ENCODE measurements at regions of chr7 and their contacts with region 1.

Region 1: GRCh38 chr7:116588641-116589594 is 64.1 kb downstream of the CAV1 start:
- DNase-seq: no peak
- H3K4me3 ChIP-seq: no peak overlapping the region
- H3K27ac ChIP-seq: peak overlapping the region in 3 of 4 donors; percentile 29 to 61 (median 56)
- H3K4me1 ChIP-seq: peaks cover 0 to 30% (median 19%) of the 10 kb centered on the region in 4 donors
- H3K27me3 ChIP-seq: no peaks in the 10 kb centered on the region
- CTCF ChIP-seq: peak; percentile 58 to 75 (median 71)
- EP300 ChIP-seq: no peak
- POLR2A ChIP-seq: no peak

Region 2: GRCh38 chr7:116173051-116174028 is 415.6 kb before region 1 on chr7:
- intact Hi-C with region 1: loop called (anchors 2 kb)
- DNase-seq: no peak
- H3K4me3 ChIP-seq: no peak overlapping the region
- H3K27ac ChIP-seq: peak overlapping the region in 1 of 4 donors; percentile 38
- H3K4me1 ChIP-seq: peaks cover 0 to 14% (median 4%) of the 10 kb centered on the region in 4 donors
- H3K27me3 ChIP-seq: no peaks in the 10 kb centered on the region
- CTCF ChIP-seq: peak; percentile 21 to 52 (median 46)
- EP300 ChIP-seq: no peak
- POLR2A ChIP-seq: no peak

Region 3: DNA sequence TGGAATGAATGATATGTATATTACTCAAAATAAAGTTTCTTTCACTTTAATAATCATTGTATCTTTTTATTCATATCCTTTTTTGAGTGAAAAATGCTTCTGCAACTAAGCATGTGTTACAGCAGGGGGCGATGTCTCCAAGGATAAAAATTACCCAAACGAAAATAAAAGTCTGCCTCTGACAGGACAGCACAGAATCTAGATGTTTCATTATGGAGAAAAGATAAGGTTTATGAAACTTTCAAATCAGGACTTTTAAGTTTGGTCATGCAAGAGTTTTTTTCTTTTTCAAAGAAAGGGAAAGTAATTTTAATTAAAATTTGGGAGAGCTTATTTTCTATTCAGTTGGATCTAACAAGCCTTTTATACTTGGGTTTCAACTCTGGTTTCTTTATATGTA is 330.2 kb before region 1 on chr7:
- intact Hi-C with region 1: loop called (anchors 2 kb)
- DNase-seq: no peak
- H3K4me3 ChIP-seq: no peak overlapping the region
- H3K27ac ChIP-seq: peak overlapping the region; percentile 52 to 70 (median 60)
- H3K4me1 ChIP-seq: peaks cover 0 to 45% (median 17%) of the 10 kb centered on the region in 4 donors
- H3K27me3 ChIP-seq: no peaks in the 10 kb centered on the region
- CTCF ChIP-seq: peak; percentile 69 to 88 (median 78)
- EP300 ChIP-seq: no peak
- POLR2A ChIP-seq: no peak

Region 4: GRCh38 chr7:116438267-116438666 is 150.7 kb before region 1 on chr7:
- intact Hi-C with region 1: loop called (anchors 10 kb)
- DNase-seq: no peak
- H3K4me3 ChIP-seq: no peak overlapping the region
- H3K27ac ChIP-seq: peak overlapping the region in 2 of 4 donors; percentile 1 to 6
- H3K4me1 ChIP-seq: peaks cover 0 to 32% (median 18%) of the 10 kb centered on the region in 4 donors
- H3K27me3 ChIP-seq: no peaks in the 10 kb centered on the region
- CTCF ChIP-seq: no peak
- EP300 ChIP-seq: no peak
- POLR2A ChIP-seq: no peak

Region 5: DNA sequence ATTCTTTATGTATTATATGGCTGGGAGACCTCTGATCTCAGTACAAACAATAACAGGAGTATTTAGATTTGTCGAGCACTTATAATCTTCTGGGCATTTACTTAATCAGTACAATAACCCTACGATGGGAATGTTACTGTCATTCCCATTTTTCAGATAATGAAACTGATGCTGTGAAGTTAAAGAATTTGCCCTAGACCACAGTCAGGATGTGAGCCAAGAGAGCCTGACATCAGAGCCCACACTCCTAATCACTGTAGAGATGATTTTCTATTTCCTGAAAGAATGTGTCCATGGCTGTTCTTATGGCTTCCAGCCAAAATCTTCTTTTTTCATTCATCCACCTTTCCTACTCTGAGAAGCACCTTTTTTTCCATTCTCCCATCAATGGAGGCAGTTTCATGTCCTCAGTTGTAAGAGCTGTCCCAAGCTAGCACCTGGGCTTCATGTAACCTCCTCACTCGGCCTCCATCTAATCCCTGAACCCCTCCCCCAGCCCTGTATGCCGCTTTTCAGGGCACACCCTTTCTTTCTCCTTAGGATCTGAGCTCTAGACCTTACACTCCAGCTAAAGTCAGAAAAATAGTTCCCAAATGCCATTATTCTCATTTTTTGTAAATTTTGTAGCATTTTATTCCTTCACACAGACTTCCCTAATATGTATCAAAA is 76.3 kb before region 1 on chr7:
- intact Hi-C with region 1: no loop called
- DNase-seq: no peak
- H3K4me3 ChIP-seq: peak overlapping the region in 3 of 4 donors; percentile 34 to 41 (median 39)
- H3K27ac ChIP-seq: peak overlapping the region; percentile 76 to 97 (median 84)
- H3K4me1 ChIP-seq: peaks cover 0 to 35% (median 18%) of the 10 kb centered on the region in 4 donors
- H3K27me3 ChIP-seq: no peaks in the 10 kb centered on the region
- CTCF ChIP-seq: no peak
- EP300 ChIP-seq: no peak
- POLR2A ChIP-seq: no peak

Region 6: GRCh38 chr7:116525913-116526861 is 62.7 kb before region 1 on chr7:
- intact Hi-C with region 1: loop called (anchors 2 kb)
- DNase-seq: peak; percentile 93
- H3K4me3 ChIP-seq: peak overlapping the region; percentile 69 to 89 (median 80)
- H3K27ac ChIP-seq: peak overlapping the region; percentile 94 to 99 (median 98)
- H3K4me1 ChIP-seq: peaks cover 0 to 40% (median 24%) of the 10 kb centered on the region in 4 donors
- H3K27me3 ChIP-seq: no peaks in the 10 kb centered on the region
- CTCF ChIP-seq: peak in 3 of 4 experiments; percentile 14 to 88 (median 42)
- EP300 ChIP-seq: no peak
- POLR2A ChIP-seq: peak in 1 of 2 donors; percentile 63

Region 7: GRCh38 chr7:116653204-116653603 is 64.3 kb after region 1 on chr7:
- intact Hi-C with region 1: no loop called
- DNase-seq: no peak
- H3K4me3 ChIP-seq: no peak overlapping the region
- H3K27ac ChIP-seq: peak overlapping the region in 3 of 4 donors; percentile 19 to 49 (median 42)
- H3K4me1 ChIP-seq: peaks cover 0 to 10% (median 9%) of the 10 kb centered on the region in 4 donors
- H3K27me3 ChIP-seq: no peaks in the 10 kb centered on the region
- CTCF ChIP-seq: no peak
- EP300 ChIP-seq: no peak
- POLR2A ChIP-seq: no peak

Region 8: DNA sequence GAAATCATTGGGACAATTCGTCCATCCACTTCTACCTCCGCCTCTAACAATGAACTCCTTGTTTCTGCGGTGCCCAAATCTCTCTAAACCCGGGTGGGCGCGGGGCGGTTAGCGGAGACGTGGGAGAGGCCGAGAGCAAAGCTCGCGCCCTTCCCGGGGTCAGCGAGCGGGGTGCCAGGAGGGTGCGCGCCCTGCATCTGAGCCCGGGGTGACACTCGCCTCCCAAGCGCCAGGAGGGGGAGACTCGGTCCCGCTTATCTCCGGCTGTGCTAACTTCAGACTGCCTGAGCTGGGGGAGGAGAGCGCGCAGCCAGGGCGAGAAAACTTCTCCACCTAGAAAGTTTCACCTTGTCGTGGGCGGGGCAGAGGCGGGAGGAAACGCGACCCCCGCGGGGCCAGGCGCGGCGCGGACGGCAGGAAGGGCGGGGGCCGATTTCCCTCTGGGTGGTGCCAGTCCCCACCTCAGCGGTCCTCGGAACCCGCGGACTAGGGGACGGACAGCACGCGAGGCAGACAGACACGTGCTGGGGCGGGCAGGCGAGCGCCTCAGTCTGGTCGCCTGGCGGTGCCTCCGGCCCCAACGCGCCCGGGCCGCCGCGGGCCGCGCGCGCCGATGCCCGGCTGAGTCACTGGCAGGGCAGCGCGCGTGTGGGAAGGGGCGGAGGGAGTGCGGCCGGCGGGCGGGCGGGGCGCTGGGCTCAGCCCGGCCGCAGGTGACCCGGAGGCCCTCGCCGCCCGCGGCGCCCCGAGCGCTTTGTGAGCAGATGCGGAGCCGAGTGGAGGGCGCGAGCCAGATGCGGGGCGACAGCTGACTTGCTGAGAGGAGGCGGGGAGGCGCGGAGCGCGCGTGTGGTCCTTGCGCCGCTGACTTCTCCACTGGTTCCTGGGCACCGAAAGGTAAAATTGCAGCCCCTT is 83.0 kb after region 1 on chr7 and contains the start of gene MET:
- intact Hi-C with region 1: loop called (anchors 2 kb)
- DNase-seq: peak; percentile 85
- H3K4me3 ChIP-seq: peak within 1 kb of the TSS; percentile 51 to 74 (median 67)
- H3K27ac ChIP-seq: peak within 1 kb of the TSS; percentile 80 to 83 (median 82)
- H3K4me1 ChIP-seq: peaks cover 0 to 26% (median 10%) of the 10 kb centered on the region in 4 donors
- H3K27me3 ChIP-seq: no peaks in the 10 kb centered on the region
- CTCF ChIP-seq: peak; percentile 47 to 58 (median 53)
- EP300 ChIP-seq: no peak
- POLR2A ChIP-seq: no peak
- total RNA-seq, gene MET: 15.9 to 21.6 (median 18.6) TPM

Region 9: DNA sequence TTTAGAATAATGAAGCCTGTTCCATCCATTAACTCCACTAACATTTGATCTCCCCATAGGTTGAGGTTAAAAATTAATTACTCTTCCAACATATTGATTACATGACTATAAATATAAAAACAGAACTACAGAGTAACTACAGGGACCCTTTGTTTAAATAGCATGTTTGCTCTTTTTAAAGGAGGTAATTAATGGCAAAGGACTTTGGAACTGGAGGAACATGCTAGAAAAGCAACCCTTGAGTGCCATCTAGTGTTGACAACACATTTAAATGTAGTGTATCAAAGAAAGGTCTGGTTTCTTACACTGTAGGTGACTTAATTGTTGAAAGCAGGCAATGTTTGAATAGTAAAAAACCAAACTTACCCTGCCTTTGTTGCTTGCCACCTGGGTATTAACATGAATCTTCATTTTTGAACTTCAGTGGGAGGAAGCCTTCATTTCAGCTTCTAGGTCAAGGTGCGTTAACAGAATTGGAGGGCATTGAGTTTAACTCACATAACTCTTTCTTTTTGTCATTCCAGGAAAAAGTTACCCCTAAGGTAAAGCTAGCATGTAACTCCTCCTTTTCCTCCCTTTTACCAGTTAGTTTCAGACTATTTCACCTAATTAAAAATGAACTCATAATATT is 220.8 kb after region 1 on chr7:
- intact Hi-C with region 1: loop called (anchors 2 kb)
- DNase-seq: no peak
- H3K4me3 ChIP-seq: no peak overlapping the region
- H3K27ac ChIP-seq: no peak overlapping the region
- H3K4me1 ChIP-seq: peaks cover 0 to 19% (median 15%) of the 10 kb centered on the region in 4 donors
- H3K27me3 ChIP-seq: no peaks in the 10 kb centered on the region
- CTCF ChIP-seq: peak in 3 of 4 experiments; percentile 46 to 63 (median 58)
- EP300 ChIP-seq: no peak
- POLR2A ChIP-seq: no peak

Measured in sigmoid colon (tissue), 7 donors.